Posterior vena cava (tissue), 2 donors: ENCODE measurements at regions of chr5 and their contacts with region 1.

Region 1: DNA sequence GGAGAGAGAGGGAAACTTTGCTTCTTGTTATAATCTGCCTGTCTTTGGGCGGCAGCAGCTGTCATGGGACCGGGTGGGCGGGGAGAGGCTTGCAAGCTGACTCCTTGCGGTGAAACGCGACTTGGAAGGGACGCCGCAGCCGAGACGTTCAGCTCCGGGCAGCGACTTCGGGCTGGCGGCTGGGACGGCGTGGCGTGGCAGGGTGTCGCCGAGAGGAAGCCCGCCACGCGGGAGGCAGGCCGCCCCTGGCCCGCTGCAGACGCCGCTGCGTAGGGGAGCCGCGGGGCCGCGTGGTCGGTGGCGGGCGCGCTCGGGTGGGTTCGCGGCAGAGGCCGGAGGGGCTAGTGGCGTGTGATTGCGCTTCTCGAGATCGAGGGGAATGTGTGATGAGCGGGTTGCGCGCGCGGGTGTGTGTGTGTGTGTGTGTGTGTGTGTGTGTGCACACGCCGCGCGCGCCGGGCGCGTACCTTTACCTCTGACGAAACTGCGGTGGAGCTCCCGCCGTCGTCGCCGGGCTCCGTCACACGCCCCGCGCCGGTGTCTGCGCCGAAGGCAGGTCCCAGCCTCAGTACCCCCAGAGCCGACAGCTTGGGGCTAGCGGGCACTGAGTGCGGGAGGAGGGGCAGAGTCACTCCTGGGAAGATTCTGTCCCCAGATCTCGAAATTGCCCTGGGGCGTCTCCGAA is 1.7 kb downstream of the PPARGC1B start:
- DNase-seq: peak; percentile 94

Region 2: GRCh38 chr5:149646564-149646963 is 85.2 kb before region 1 on chr5:
- intact Hi-C with region 1: no loop called
- DNase-seq: no peak

Region 3: DNA sequence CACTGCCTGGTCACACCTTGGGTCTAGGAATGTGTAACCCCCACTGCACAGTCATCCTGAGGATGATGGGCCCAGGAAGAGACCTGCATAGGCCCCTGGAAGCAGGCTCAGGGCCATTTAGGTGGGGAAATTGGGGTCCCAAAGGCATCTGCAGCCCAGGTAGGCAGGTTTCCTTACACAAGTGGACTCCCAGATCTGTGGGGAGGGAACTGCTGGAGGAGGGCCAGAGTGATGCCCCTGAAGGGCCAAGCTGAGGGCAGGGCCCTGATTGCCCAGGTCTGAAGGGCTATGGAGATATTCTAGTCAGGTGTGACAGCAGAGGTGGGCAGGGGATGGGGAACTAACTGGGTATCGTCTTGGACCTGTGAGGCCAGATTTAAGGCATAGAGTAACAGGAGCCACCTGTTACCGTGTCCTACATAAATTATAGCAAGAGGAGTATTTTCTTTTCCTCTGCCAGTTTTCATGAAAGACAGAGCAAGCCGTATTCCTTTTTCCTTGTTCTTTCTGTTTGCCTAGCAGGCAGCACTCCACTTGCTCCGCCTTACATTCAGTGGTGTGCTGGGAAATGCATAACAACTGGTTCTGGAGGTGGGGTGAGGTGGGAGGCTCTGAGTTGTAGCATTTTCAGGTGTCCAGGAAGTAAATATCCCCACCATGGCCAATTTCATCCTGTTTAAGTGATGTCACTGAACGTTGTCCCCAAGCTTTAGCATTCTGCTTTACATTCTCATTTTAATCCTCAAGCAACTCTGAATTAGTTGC is 39.6 kb after region 1 on chr5:
- intact Hi-C with region 1: loop called in 1 of 2 experiments (anchors 5 kb)
- DNase-seq: peak; percentile 45

Region 4: DNA sequence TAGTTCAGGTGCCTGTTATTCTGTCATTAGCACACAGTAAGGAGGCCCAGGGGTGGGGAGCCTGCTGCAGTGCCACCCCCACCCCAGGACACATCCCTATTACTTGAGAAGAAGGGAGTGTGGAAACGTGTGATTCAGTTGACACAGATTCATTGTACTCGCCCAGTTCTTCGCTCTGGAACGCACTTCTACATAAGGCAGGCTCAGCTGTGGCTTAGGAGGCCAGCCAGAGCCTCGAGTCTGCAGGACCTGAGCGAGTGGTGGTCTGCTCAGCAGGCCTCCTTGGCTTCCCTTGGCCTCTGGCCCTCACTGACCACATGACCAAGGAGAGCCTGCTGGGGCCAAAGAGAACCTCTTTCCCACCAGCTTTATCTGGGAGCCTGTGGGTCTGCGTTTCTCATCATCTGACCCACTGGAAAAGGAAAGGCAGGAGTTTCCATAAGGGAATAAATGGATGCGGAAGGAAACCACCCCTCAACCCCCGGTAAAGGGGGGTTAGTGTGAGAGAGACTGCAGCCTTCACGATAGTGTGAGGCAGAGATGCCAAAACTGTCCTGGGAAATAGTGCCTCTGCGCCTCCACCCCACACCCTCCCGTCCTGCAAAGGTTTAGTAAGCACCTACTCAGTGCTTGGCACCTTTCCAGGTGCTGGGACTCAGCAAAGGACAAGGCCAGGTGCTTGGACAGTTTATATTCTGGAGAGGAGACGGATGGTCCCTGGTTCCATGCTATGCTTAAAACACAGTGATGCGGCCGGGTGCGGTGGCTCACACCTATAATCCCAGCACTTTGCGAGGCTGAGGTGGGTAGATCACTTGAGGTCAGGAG is 72.1 kb after region 1 on chr5:
- intact Hi-C with region 1: loop called in 1 of 2 experiments (anchors 10 kb)
- DNase-seq: no peak

Region 5: DNA sequence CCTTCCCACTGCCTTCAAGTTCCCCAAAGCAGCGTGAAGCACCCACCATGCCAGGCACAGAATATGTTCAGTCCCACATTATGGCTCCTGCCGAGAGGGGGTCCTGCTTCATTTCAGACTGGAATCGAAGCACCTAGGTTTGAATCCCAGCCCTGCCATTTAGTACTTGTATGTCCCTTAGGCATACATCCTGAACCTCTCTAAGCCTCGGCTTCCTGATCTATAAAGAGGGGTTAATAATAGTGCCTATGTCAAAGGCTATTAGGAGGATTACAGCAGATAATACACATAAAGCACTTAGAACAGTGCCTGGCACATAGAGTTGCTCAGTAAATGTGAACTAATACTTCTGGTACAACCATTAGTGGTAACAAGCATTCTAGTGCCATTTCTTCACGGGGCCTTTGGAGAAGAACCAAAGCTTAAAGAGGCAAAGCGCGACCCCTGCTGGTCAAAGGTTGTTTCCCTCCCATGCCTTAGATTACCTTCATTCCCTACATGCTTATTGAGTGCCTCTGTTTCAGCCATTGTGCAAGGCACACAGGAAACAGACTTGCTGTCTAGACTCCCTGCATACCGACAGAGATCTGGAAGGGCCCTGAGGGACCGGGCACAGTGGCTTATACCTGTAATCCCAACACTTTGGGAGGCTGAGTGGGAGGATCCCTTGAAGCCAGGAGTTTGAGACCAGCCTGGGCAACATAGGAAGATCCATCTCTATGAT is 96.5 kb after region 1 on chr5:
- intact Hi-C with region 1: loop called in 1 of 2 experiments (anchors 5 kb)
- DNase-seq: peak; percentile 96